HepG2 (cell line): ENCODE measurements at regions of chr2 and their contacts with region 1.

Region 1: DNA sequence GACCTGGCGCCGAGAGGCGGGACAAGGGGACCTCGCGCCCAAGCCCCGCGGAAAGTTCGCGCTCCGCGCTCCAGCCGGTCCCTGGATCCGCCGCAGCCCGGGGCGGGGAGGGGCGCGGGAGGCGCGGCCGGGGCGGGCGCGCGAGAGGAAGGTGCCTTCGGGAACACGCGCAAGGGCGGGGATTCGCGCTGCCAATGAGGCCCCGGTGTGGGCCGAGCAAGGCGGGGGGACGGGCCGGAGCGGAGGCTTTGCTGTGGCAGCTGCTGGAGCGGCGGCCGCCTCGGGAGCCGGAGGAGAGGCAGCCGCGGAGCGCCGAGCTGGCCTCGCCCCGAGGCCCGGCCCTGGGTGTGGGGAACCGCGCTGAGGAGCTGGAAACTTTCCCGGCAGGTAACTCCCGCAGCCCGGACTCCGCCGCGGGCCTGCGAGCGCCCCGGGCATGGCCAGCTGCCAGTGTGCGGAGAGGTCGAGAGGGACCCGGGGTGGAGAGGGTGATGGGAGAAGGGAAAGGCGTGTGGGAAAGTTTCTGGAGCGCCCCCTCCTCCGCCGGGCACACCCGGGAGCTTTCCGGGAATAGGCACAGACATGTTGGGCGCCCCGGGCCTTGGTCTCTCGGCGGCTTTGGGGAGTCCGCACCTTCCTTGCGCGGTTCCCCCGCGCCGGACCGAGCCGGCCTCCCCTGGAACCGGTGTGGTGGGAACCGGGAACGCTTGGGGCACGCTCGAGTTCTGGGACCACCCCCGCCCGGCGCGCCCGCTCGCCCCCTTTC is at the start of gene TANC1:
- DNase-seq: peak; percentile 77
- ATAC-seq: peak; percentile 93
- H3K4me3 ChIP-seq: peak within 1 kb of the TSS; percentile 71 to 84 (median 76)
- H3K27ac ChIP-seq: no peak within 1 kb of the TSS
- H3K4me1 ChIP-seq: peaks cover 34% of the 10 kb centered on the region
- H3K27me3 ChIP-seq: peaks cover 0 to 52% of the 10 kb centered on the region in 2 experiments; a peak in 4 of 5 replicates
- CTCF ChIP-seq: no peak; the same call in 1 of the 2 replicates
- EP300 ChIP-seq: no peak
- POLR2A ChIP-seq: peak; percentile 35 to 54; a peak in 3 of 4 replicates
- RAD21 ChIP-seq: no peak
- total RNA-seq, gene TANC1: 2.3 and 2.8 TPM in 2 replicates

Region 2: DNA sequence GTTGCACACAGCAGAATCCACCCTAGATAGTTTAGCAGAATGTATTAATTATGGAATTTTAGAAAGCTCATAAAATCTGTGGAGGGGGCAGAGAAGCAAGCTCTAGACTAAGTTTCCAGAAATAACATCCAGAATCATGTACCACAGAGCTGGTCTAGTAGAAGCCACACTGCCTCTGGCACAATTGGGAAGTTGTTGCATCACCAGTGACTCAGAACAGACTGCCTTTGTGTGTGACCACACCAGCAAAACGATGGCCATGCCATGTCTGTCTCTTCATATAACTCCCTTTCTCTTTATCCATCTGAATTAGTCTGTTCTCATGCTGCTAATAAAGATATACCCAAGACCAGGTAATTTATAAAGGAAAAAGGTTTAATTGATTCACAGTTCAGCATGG is 671.0 kb before region 1 on chr2:
- CTCF ChIA-PET with region 1: no interaction called
- POLR2A ChIA-PET with region 1: no interaction called
- in situ Hi-C with region 1: no loop called
- intact Hi-C with region 1: loop called (anchors 10 kb)
- DNase-seq: no peak
- ATAC-seq: no peak
- H3K4me3 ChIP-seq: no peak overlapping the region
- H3K27ac ChIP-seq: no peak overlapping the region
- H3K4me1 ChIP-seq: peaks cover 12% of the 10 kb centered on the region
- H3K27me3 ChIP-seq: no peaks in the 10 kb centered on the region; a peak in 2 of 5 replicates
- CTCF ChIP-seq: no peak
- EP300 ChIP-seq: no peak
- POLR2A ChIP-seq: no peak
- RAD21 ChIP-seq: no peak

Region 3: DNA sequence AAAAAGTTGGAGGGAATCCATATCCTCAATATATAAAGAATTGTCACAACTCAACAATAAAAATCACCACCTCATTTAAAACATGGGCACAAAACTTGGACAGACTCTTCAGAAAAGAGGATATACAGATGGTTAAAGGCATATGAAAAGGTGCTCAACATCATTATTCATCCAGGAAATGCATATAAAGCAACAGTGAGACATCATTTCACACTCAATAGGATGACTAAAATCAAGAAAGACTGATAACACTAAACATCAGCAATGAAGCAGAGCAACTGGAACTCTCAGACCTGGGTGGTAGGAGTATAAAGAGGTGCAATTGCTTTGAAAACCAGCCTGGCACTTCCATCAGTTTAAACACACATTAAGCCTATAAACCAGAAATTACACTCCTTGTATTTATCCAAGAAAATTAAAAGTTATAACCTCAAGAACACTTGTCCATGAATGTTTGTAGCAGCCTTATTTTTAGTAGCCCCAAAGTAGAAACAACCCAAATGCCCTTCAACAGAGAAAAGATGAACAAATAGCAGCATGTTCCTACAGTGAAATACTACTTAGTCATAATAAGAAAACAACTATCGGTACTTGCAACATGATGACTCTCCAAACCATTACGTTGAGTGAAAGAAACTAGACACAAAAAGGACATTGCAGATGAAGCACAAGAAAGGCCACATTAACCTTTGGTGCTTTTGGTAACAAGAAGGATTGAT is 79.3 kb before region 1 on chr2:
- CTCF ChIA-PET with region 1: no interaction called
- POLR2A ChIA-PET with region 1: no interaction called
- in situ Hi-C with region 1: no loop called
- intact Hi-C with region 1: no loop called
- DNase-seq: no peak
- ATAC-seq: no peak
- H3K4me3 ChIP-seq: no peak overlapping the region
- H3K27ac ChIP-seq: no peak overlapping the region
- H3K4me1 ChIP-seq: peaks cover 11% of the 10 kb centered on the region
- H3K27me3 ChIP-seq: no peaks in the 10 kb centered on the region
- CTCF ChIP-seq: no peak
- EP300 ChIP-seq: no peak
- POLR2A ChIP-seq: no peak
- RAD21 ChIP-seq: no peak